H1 (cell line): ENCODE measurements at regions of chr16 and their contacts with region 1.

Region 1: GRCh38 chr16:78505544-78506366 is 406.3 kb downstream of the WWOX start:
- DNase-seq: peak in 1 of 2 experiments; percentile 49
- H3K4me3 ChIP-seq: no peak overlapping the region
- H3K27ac ChIP-seq: no peak overlapping the region
- H3K4me1 ChIP-seq: no peaks in the 10 kb centered on the region; a peak in 1 of 7 replicates
- H3K27me3 ChIP-seq: no peaks in the 10 kb centered on the region
- CTCF ChIP-seq: peak; percentile 28 to 39 (median 36)
- EP300 ChIP-seq: no peak
- POLR2A ChIP-seq: no peak
- RAD21 ChIP-seq: peak; percentile 19 to 46; a peak in 3 of 4 replicates

Region 2: GRCh38 chr16:78415013-78415412 is 90.7 kb before region 1 on chr16:
- CTCF ChIA-PET with region 1: no interaction called
- POLR2A ChIA-PET with region 1: no interaction called
- DNase-seq: no peak
- H3K4me3 ChIP-seq: no peak overlapping the region
- H3K27ac ChIP-seq: no peak overlapping the region
- H3K4me1 ChIP-seq: peaks cover 0 to 4% (median 0%) of the 10 kb centered on the region in 4 experiments; a peak in 1 of 7 replicates
- H3K27me3 ChIP-seq: no peaks in the 10 kb centered on the region
- CTCF ChIP-seq: no peak
- EP300 ChIP-seq: no peak
- POLR2A ChIP-seq: no peak
- RAD21 ChIP-seq: no peak

Region 3: GRCh38 chr16:78522327-78522726 is 16.6 kb after region 1 on chr16:
- CTCF ChIA-PET with region 1: interaction called, 10 read pairs
- POLR2A ChIA-PET with region 1: no interaction called
- DNase-seq: no peak
- H3K4me3 ChIP-seq: no peak overlapping the region
- H3K27ac ChIP-seq: no peak overlapping the region
- H3K4me1 ChIP-seq: no peaks in the 10 kb centered on the region
- H3K27me3 ChIP-seq: no peaks in the 10 kb centered on the region; a peak in 1 of 7 replicates
- CTCF ChIP-seq: no peak
- EP300 ChIP-seq: no peak
- POLR2A ChIP-seq: no peak
- RAD21 ChIP-seq: no peak